ENCODE measurements at regions of chr3 and their contacts with region 1.

Region 1: DNA sequence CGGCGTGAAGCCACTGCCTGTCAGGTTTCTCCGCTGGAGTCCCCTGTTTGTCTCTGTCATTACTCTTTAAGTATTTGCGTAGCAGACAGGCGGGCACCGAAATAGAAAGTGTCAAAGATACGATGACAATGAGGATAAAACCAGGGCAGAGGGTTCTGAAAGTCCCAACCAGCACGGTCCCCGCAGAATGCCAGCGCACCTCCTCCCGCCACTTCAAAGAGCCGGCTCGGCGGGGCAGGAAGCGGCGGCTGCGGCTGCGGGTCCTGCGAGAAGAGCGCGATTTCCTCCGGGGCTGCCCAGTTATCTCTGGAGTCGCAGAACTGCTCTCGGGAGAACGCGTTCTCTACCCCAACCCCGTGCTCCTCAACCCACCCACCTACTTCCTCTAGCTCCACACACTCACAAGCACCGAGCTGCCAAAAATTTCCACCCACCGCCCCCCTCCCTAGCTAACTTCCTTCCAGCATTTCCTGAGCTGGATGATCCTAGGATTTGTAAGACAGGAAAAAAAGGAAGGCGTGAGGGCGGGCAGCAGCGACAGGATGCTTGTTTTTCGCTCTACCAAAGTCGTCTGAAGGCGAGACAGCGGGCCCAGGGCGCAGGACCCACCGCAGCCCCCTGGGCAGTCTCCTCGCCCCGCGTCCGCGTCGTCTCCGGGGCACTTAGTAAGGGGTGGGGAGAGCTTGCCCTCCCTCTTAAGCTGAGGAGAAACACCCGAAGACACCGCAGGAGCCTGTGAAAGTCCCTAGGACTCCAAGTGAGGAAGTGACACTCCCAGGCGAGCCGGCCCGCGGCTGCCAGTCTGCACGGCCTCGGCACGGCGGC is at the start of gene ARHGAP31:
- DNase-seq: peak; percentile 65 to 75
- ATAC-seq: peak; percentile 76 to 83 (median 78)
- H3K4me3 ChIP-seq: peak within 1 kb of the TSS; percentile 88
- H3K27ac ChIP-seq: peak within 1 kb of the TSS; percentile 78
- H3K4me1 ChIP-seq: peaks cover 7% of the 10 kb centered on the region
- H3K27me3 ChIP-seq: no peaks in the 10 kb centered on the region
- CTCF ChIP-seq: no peak
- total RNA-seq, gene ARHGAP31: 5.3 to 13.2 (median 9.0) TPM

Region 2: DNA sequence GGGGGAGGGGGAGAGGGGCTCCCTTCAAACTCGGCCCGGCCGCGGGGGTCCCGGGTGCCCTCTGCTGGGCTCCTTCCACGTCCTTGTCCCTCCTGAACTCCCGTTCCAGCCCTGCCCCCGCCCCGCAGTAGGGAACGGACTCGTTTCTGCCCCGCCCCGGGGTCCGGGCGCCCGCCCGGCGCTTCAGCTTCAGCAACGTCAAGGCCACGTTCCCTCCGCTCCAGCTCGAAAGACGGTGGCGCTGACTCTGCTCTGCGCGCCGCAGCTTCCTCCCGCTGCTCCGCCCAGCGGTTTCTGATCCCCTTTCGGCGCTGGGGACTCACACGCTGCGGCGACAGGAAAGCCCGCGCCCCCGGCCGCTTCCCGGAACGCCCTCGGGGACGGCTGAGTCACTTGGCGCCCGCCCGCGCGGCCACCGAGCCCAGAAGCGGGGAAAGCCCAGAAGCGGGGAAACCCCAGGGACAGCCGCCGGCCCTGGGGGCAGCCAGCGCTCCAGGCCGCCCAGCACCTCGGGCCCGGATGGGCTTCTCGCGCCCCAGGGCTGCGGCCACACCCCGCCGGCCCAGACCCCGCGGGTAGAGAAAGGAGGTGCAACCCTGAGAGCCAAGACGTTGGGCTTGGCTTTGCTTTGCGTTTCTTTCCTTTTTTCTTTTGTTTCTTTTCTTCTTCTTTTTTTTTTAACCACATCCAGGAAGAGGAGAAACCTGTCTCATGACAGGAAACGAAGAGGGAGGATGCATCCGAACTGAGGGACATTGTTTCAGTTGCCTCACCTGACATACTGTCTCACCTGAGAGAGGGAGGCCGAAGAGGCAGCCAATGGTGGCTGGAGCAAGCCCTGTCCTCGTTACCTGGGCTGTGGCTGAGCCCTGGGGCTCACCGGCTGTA is 29.0 kb after region 1 on chr3:
- intact Hi-C with region 1: loop called in 1 of 2 experiments (anchors 1 kb)
- DNase-seq: peak; percentile 88 to 92
- ATAC-seq: peak; percentile 88 to 94 (median 92)
- H3K4me3 ChIP-seq: peak overlapping the region; percentile 81
- H3K27ac ChIP-seq: peak overlapping the region; percentile 85
- H3K4me1 ChIP-seq: peaks cover 9% of the 10 kb centered on the region
- H3K27me3 ChIP-seq: no peaks in the 10 kb centered on the region
- CTCF ChIP-seq: no peak